Right ventricle myocardium superior (tissue), 1 donor: ENCODE measurements at regions of chr15 and their contacts with region 1.

Region 1: DNA sequence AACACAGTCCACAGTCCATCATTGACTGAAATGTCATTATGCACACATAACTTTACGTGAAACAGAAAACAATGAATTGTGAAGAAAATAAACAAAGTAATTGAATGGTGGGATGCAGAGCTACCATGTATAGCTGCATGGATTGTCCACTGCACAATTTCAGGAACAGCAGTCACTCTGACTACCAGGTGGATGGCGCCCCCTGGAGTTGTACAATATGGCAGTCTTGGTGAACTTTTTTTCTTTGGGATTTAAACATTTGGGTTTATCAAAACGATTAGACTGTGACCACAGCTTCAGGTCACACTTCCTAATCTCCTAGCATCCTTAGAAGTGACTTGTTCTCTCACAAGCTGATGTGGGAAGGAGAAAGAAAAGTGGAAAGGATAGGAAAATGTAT is 48.9 kb upstream of the TCF12 start:
- DNase-seq: peak; percentile 51
- ATAC-seq: no peak

Region 2: DNA sequence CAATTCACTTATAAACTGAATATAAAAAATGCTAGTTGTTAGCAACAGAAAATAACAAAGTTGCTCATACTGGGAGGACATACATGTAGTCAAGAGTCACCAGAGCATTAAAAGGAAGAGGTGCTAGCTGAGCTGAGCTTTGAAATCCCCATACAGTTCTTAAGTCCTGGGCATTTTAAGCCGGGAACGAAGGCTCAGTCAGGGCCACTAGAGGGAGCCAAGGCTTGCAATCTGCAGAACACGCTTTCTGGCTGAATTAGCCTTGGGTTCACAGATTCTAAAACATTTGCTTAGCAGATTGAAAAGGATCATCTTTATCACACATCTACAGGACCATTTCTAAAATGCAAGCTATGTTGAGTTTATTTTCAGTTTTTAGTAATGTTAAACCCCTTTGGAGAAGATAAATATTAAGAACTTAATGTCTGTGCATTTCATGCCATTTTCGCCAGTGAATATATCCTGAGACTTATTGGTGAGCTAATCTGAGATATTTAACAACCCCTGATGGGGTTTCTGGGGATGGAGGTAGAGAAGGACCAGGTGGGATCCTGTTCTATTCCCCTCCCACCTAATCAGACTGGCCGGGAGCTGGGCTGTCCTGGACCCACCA is 378.4 kb before region 1 on chr15:
- intact Hi-C with region 1: loop called (anchors 10 kb)
- DNase-seq: peak; percentile 66
- ATAC-seq: peak; percentile 71